T-cell (primary cell): ENCODE measurements at regions of chr20 and their contacts with region 1.

Region 1: DNA sequence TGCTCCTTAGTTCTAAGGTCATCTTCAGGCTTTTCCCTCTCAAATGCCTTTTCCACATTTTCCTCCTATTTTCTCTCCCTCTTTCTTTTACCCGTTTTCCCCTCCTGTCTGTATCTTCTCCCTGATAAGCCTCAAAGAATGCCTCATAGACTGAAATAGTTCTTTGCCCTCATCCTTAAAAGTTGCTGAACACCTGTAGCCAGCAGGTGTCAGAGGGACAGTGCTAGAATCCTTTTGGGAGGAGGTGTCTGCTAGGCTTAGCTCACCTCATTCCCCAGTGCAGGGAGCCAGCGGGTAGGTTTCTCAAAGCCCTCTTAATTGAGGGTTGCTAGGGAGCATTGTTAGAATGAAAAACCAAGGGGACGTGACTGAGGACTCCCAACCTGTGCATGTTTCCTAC is 204.0 kb downstream of the TSHZ2 start:
- DNase-seq: no peak
- ATAC-seq: no peak
- H3K4me3 ChIP-seq: no peak overlapping the region
- H3K4me3 Mint-ChIP-seq: no peak overlapping the region
- H3K27ac ChIP-seq: no peak overlapping the region
- H3K27ac Mint-ChIP-seq: no peak overlapping the region
- H3K4me1 ChIP-seq: no peaks in the 10 kb centered on the region
- H3K4me1 Mint-ChIP-seq: peaks cover 0 to 17% (median 0%) of the 10 kb centered on the region in 3 donors
- H3K27me3 ChIP-seq: peaks cover 5 to 6% of the 10 kb centered on the region in 2 experiments
- H3K27me3 Mint-ChIP-seq: peaks cover 0 to 12% of the 10 kb centered on the region in 2 donors

Region 2: GRCh38 chr20:52830598-52830997 is 345.5 kb before region 1 on chr20:
- CTCF ChIA-PET with region 1: no interaction called
- POLR2A ChIA-PET with region 1: interaction called in 1 of 2 experiments, 11 read pairs
- DNase-seq: no peak
- ATAC-seq: no peak
- H3K4me3 ChIP-seq: no peak overlapping the region
- H3K4me3 Mint-ChIP-seq: no peak overlapping the region
- H3K27ac ChIP-seq: no peak overlapping the region
- H3K27ac Mint-ChIP-seq: no peak overlapping the region
- H3K4me1 ChIP-seq: no peaks in the 10 kb centered on the region
- H3K4me1 Mint-ChIP-seq: no peaks in the 10 kb centered on the region
- H3K27me3 ChIP-seq: peaks cover 0 to 1% of the 10 kb centered on the region in 2 experiments
- H3K27me3 Mint-ChIP-seq: peaks cover 0 to 4% of the 10 kb centered on the region in 2 donors

Region 3: GRCh38 chr20:53149890-53150205 is 26.3 kb before region 1 on chr20:
- CTCF ChIA-PET with region 1: no interaction called
- POLR2A ChIA-PET with region 1: no interaction called
- DNase-seq: no peak
- ATAC-seq: no peak
- H3K4me3 ChIP-seq: no peak overlapping the region
- H3K4me3 Mint-ChIP-seq: no peak overlapping the region
- H3K27ac ChIP-seq: no peak overlapping the region
- H3K27ac Mint-ChIP-seq: no peak overlapping the region
- H3K4me1 ChIP-seq: no peaks in the 10 kb centered on the region
- H3K4me1 Mint-ChIP-seq: peaks cover 22 to 62% (median 38%) of the 10 kb centered on the region in 3 donors
- H3K27me3 ChIP-seq: peaks cover 0 to 2% of the 10 kb centered on the region in 2 experiments
- H3K27me3 Mint-ChIP-seq: peaks cover 2 to 7% of the 10 kb centered on the region in 2 donors